PC-9 (cell line): ENCODE measurements at regions of chr3 and their contacts with region 1.

Region 1: GRCh38 chr3:45583021-45583851 is 11.3 kb upstream of the LIMD1 start:
- DNase-seq: no peak
- H3K4me3 ChIP-seq: no peak overlapping the region
- H3K27ac ChIP-seq: no peak overlapping the region
- H3K4me1 ChIP-seq: no peaks in the 10 kb centered on the region
- H3K27me3 ChIP-seq: no peaks in the 10 kb centered on the region
- CTCF ChIP-seq: no peak

Region 2: GRCh38 chr3:45746777-45747622 is 163.8 kb after region 1 on chr3:
- CTCF ChIA-PET with region 1: no interaction called
- POLR2A ChIA-PET with region 1: no interaction called
- intact Hi-C with region 1: no loop called
- DNase-seq: no peak
- H3K4me3 ChIP-seq: no peak overlapping the region
- H3K27ac ChIP-seq: no peak overlapping the region
- H3K4me1 ChIP-seq: no peaks in the 10 kb centered on the region
- H3K27me3 ChIP-seq: no peaks in the 10 kb centered on the region
- CTCF ChIP-seq: no peak

Region 3: GRCh38 chr3:46221391-46221790 is 638.2 kb after region 1 on chr3:
- CTCF ChIA-PET with region 1: interaction called, 11 read pairs
- POLR2A ChIA-PET with region 1: no interaction called
- intact Hi-C with region 1: no loop called
- DNase-seq: no peak
- H3K4me3 ChIP-seq: no peak overlapping the region
- H3K27ac ChIP-seq: no peak overlapping the region
- H3K4me1 ChIP-seq: no peaks in the 10 kb centered on the region
- H3K27me3 ChIP-seq: no peaks in the 10 kb centered on the region
- CTCF ChIP-seq: no peak